MCF 10A (cell line): ENCODE measurements at regions of chr22 and their contacts with region 1.

Region 1: DNA sequence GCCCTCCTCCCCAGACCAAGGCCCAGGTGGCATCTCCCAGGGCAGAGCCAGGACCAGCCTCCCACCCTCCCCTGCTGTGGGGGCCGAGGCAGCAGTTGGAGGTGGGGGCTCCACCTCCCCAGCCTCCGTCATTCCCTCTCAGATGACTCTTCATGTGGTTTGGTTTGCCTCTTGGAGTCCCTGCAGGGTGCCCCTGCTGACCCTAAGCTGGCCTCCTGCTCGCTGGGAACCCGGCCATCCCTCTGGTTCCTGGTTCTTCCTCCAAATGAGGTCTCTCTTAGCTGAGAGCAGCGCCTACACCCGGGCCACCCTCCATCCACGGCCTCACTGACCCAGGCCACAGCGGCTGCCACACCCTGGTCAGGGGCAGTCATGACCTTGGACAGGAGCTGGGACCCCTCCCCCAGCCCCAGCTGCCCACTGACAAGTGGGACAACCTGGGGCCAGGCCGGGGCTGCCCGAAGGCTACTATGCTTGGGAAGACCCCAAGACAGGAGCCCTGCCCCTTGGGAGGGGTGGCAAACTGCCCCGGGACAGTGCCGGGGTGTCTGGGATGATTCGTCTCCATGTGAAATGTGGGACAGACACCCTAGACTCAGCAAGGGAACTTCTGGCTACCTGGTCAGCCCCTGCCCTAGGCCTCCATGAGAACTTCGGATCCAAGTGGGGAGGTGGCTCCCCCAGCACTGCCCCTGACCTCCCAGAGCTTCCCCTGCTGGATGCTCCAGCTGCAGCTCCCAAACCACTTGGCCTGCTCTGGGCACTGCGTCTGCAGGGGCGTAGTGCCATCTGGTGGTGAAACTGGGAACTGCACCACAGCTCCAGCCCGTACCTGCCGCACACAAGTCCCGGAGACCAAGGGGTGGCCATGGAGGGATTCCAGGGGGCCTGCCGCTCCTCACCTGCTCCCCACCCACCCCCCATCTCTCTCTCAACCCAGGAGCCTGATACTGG is 194.5 kb downstream of the IGLL1 start:
- DNase-seq: peak; percentile 64
- H3K4me3 Mint-ChIP-seq: no peak overlapping the region
- H3K27ac Mint-ChIP-seq: no peak overlapping the region
- H3K4me1 Mint-ChIP-seq: no peaks in the 10 kb centered on the region
- H3K27me3 Mint-ChIP-seq: peaks cover 10% of the 10 kb centered on the region
- CTCF ChIP-seq: peak; percentile 98

Region 2: GRCh38 chr22:23128269-23129108 is 257.1 kb before region 1 on chr22:
- CTCF ChIA-PET with region 1: interaction called, 3 read pairs
- POLR2A ChIA-PET with region 1: no interaction called
- intact Hi-C with region 1: loop called (anchors 1 kb)
- DNase-seq: peak; percentile 68
- H3K4me3 Mint-ChIP-seq: no peak overlapping the region
- H3K27ac Mint-ChIP-seq: no peak overlapping the region
- H3K4me1 Mint-ChIP-seq: no peaks in the 10 kb centered on the region
- H3K27me3 Mint-ChIP-seq: peaks cover 20% of the 10 kb centered on the region
- CTCF ChIP-seq: peak; percentile 80

Region 3: GRCh38 chr22:23315341-23315917 is 70.1 kb before region 1 on chr22:
- CTCF ChIA-PET with region 1: interaction called, 13 read pairs
- POLR2A ChIA-PET with region 1: no interaction called
- intact Hi-C with region 1: loop called (anchors 1 kb)
- DNase-seq: peak; percentile 67
- H3K4me3 Mint-ChIP-seq: no peak overlapping the region
- H3K27ac Mint-ChIP-seq: peak overlapping the region; percentile 39
- H3K4me1 Mint-ChIP-seq: no peaks in the 10 kb centered on the region
- H3K27me3 Mint-ChIP-seq: no peaks in the 10 kb centered on the region
- CTCF ChIP-seq: peak; percentile 73

Region 4: DNA sequence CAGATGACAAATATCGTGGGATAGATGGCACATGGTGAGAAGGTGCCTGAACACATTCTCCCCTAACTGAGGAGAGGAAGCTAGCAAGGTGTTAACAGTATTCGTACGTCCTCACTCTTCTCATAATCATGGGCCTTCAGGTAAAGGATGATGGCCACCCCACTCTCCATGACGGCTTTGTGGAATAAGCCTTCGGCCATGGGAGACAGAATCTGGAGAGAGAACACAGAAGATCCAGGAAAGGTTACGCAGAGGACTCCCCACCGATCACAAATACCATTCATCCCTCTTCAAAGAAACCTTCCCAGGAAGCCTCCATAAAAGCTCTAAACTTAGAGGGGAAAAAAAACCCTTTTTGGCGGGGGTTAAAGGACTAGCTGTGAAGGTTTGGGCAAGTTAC is 15.3 kb before region 1 on chr22:
- CTCF ChIA-PET with region 1: interaction called, 15 read pairs
- POLR2A ChIA-PET with region 1: no interaction called
- intact Hi-C with region 1: no loop called
- DNase-seq: no peak
- H3K4me3 Mint-ChIP-seq: no peak overlapping the region
- H3K27ac Mint-ChIP-seq: no peak overlapping the region
- H3K4me1 Mint-ChIP-seq: no peaks in the 10 kb centered on the region
- H3K27me3 Mint-ChIP-seq: peaks cover 78% of the 10 kb centered on the region
- CTCF ChIP-seq: no peak

Region 5: GRCh38 chr22:23457355-23458068 is 71.9 kb after region 1 on chr22:
- CTCF ChIA-PET with region 1: no interaction called
- POLR2A ChIA-PET with region 1: no interaction called
- intact Hi-C with region 1: no loop called
- DNase-seq: no peak
- H3K4me3 Mint-ChIP-seq: no peak overlapping the region
- H3K27ac Mint-ChIP-seq: no peak overlapping the region
- H3K4me1 Mint-ChIP-seq: no peaks in the 10 kb centered on the region
- H3K27me3 Mint-ChIP-seq: peaks cover 41% of the 10 kb centered on the region
- CTCF ChIP-seq: no peak